Left cardiac atrium (tissue), 4 donors: ENCODE measurements at regions of chr11 and their contacts with region 1.

Region 1: DNA sequence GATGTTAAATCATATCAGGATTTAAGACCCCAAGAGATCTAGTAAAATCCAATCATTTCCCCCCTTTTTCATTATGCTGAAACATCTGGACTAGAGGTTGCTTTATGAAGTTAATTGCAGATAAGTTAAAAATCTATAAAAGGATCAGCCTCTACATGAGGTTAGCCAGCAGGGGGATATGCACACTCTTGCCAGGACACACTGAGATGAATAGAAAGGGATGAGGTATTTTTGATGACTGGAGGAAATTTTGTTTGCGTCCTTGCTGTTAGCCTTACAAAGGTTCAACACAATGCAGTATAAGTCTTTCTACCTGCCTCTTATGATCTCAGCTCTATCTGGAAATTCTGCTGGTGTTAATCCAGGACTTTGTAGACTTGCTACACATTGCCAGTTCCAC is 1034.3 kb downstream of the LRRC4C start:
- DNase-seq: no peak
- ATAC-seq: no peak

Region 2: DNA sequence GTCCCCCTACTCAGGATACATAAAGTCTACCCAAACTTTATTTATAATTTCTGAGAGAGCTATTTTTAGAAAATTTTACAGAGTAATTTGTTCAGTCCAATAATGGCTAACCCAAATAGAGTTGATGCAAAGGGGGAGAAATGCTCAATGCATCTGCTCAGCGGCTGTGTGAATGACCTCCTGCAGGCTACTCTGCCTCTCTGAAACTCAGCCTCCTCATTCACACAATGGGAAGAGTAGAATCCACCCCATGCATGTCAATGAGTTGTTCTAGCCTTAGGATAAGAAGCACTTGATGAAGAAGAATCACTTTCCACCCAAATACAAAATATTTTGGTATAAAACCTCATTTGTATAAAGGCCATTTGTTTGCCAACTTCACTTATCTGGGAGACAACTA is 169.7 kb before region 1 on chr11:
- intact Hi-C with region 1: no loop called
- DNase-seq: no peak
- ATAC-seq: no peak

Region 3: GRCh38 chr11:40467771-40468170 is 42.6 kb after region 1 on chr11:
- intact Hi-C with region 1: no loop called
- DNase-seq: no peak
- ATAC-seq: no peak

Region 4: GRCh38 chr11:40491341-40491740 is 66.2 kb after region 1 on chr11:
- intact Hi-C with region 1: loop called in 1 of 2 experiments (anchors 10 kb)
- DNase-seq: no peak
- ATAC-seq: no peak

Region 5: DNA sequence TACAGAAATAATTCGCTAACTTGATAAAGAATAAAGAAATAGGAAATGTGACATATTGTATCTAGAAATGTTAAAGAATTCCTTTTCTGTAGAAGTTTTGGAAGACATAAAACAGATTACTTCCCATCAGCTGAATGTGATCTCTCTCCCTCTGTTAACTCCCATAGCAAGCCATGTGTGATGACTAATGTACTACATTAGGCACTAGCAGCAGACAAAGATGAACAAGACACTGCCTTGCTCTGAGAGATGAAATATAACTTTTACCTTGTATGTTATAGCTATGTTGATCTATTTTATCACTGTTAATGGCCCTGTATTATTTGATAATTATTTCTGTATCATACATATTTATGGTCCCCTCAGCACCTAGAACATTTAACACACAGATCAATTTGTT is 217.1 kb after region 1 on chr11:
- intact Hi-C with region 1: no loop called
- DNase-seq: no peak
- ATAC-seq: no peak